ENCODE measurements at regions of chr15 and their contacts with region 1.

Region 1: GRCh38 chr15:76057332-76058000 is 2.3 kb upstream of the TMEM266 start:
- DNase-seq: no peak
- H3K4me3 ChIP-seq: no peak overlapping the region
- H3K27ac ChIP-seq: no peak overlapping the region
- H3K27me3 ChIP-seq: peaks cover 42% of the 10 kb centered on the region
- CTCF ChIP-seq: peak; percentile 77

Region 2: DNA sequence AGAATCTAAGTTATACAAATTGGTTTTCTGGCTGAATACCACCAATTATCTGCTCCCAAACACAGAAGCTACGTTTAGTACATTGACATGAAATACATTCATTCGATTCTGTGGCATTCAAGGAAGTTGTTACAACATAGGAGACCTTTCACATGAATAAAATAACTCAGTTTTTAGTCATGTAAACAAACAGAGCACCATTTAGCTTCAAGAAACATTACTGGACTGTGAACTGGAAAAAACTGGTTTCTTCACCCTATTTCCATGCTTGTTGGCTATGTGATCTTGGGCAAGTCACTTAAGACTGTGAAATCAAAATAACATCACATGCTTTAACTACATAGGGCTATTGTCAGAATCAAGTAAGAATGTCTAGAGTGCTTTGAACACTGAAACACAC is 91.4 kb before region 1 on chr15:
- CTCF ChIA-PET with region 1: interaction called, 10 read pairs
- POLR2A ChIA-PET with region 1: no interaction called
- DNase-seq: peak; percentile 34
- H3K4me3 ChIP-seq: no peak overlapping the region
- H3K27ac ChIP-seq: no peak overlapping the region
- H3K27me3 ChIP-seq: no peaks in the 10 kb centered on the region
- CTCF ChIP-seq: no peak

Region 3: GRCh38 chr15:76118051-76118450 is 60.6 kb after region 1 on chr15:
- CTCF ChIA-PET with region 1: no interaction called
- POLR2A ChIA-PET with region 1: interaction called, 11 read pairs
- DNase-seq: no peak
- H3K4me3 ChIP-seq: no peak overlapping the region
- H3K27ac ChIP-seq: no peak overlapping the region
- H3K27me3 ChIP-seq: peaks cover 8% of the 10 kb centered on the region
- CTCF ChIP-seq: no peak

Region 4: GRCh38 chr15:76150971-76151598 is 93.6 kb after region 1 on chr15:
- CTCF ChIA-PET with region 1: interaction called, 48 read pairs
- POLR2A ChIA-PET with region 1: no interaction called
- DNase-seq: peak; percentile 68
- H3K4me3 ChIP-seq: no peak overlapping the region
- H3K27ac ChIP-seq: peak overlapping the region; percentile 57
- H3K27me3 ChIP-seq: peaks cover 8% of the 10 kb centered on the region
- CTCF ChIP-seq: peak; percentile 89

Measured in AG04450 (cell line).